CD8-positive, alpha-beta T cell (primary cell): ENCODE measurements at regions of chr10 and their contacts with region 1.

Region 1: GRCh38 chr10:11515596-11516430 is 95.6 kb downstream of the USP6NL start:
- DNase-seq: peak in 7 of 9 experiments; percentile 3 to 77 (median 45)
- ATAC-seq: peak; percentile 85
- H3K4me3 ChIP-seq: no peak overlapping the region
- H3K4me3 Mint-ChIP-seq: no peak overlapping the region
- H3K27ac ChIP-seq: no peak overlapping the region
- H3K27ac Mint-ChIP-seq: no peak overlapping the region
- H3K4me1 ChIP-seq: peaks cover 6% of the 10 kb centered on the region
- H3K4me1 Mint-ChIP-seq: peaks cover 4% of the 10 kb centered on the region
- H3K27me3 ChIP-seq: no peaks in the 10 kb centered on the region
- H3K27me3 Mint-ChIP-seq: no peaks in the 10 kb centered on the region
- CTCF ChIP-seq: peak; percentile 67

Region 2: GRCh38 chr10:11045995-11046775 is 469.6 kb before region 1 on chr10:
- CTCF ChIA-PET with region 1: no interaction called
- POLR2A ChIA-PET with region 1: no interaction called
- intact Hi-C with region 1: no loop called
- DNase-seq: no peak
- ATAC-seq: no peak
- H3K4me3 ChIP-seq: no peak overlapping the region
- H3K4me3 Mint-ChIP-seq: no peak overlapping the region
- H3K27ac ChIP-seq: no peak overlapping the region
- H3K27ac Mint-ChIP-seq: no peak overlapping the region
- H3K4me1 ChIP-seq: no peaks in the 10 kb centered on the region
- H3K4me1 Mint-ChIP-seq: peaks cover 1% of the 10 kb centered on the region
- H3K27me3 ChIP-seq: no peaks in the 10 kb centered on the region
- H3K27me3 Mint-ChIP-seq: peaks cover 7% of the 10 kb centered on the region
- CTCF ChIP-seq: no peak

Region 3: DNA sequence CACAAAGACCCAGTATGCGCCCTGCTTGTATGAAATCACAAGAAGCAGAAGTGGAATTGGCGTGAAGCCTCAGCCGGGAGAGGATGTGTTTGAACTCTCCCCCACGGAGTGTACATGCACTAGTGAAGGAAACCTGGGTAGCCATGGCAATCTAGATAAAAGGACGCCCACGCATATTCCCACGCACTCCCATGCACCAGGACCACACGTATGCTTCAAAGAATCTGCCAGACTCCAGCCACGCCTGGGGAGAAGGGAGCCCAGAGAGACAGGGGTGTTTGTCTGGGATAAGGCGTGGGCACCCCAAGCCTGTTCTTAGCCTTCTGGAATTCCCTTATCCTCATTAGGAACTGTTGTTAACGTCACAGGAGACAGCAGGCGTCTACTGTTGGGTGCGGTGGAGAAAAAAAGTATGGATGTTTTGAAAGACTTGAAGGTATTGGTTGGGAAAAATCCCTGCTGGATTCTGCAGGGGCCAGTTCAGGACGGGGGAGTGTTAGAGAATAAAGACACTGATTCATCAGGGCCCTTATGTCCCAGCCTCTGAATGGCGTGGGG is 197.5 kb after region 1 on chr10:
- CTCF ChIA-PET with region 1: interaction called, 12 read pairs
- POLR2A ChIA-PET with region 1: no interaction called
- intact Hi-C with region 1: no loop called
- DNase-seq: no peak
- ATAC-seq: no peak
- H3K4me3 ChIP-seq: no peak overlapping the region
- H3K4me3 Mint-ChIP-seq: no peak overlapping the region
- H3K27ac ChIP-seq: no peak overlapping the region
- H3K27ac Mint-ChIP-seq: no peak overlapping the region
- H3K4me1 ChIP-seq: peaks cover 8% of the 10 kb centered on the region
- H3K4me1 Mint-ChIP-seq: peaks cover 22% of the 10 kb centered on the region
- H3K27me3 ChIP-seq: peaks cover 0 to 5% of the 10 kb centered on the region in 2 experiments
- H3K27me3 Mint-ChIP-seq: peaks cover 9% of the 10 kb centered on the region
- CTCF ChIP-seq: no peak

Region 4: GRCh38 chr10:11724938-11725776 is 209.3 kb after region 1 on chr10:
- CTCF ChIA-PET with region 1: interaction called, 63 read pairs
- POLR2A ChIA-PET with region 1: no interaction called
- intact Hi-C with region 1: loop called (anchors 1 kb)
- DNase-seq: peak in 2 of 9 experiments; percentile 48 to 68
- ATAC-seq: peak; percentile 73
- H3K4me3 ChIP-seq: no peak overlapping the region
- H3K4me3 Mint-ChIP-seq: no peak overlapping the region
- H3K27ac ChIP-seq: no peak overlapping the region
- H3K27ac Mint-ChIP-seq: no peak overlapping the region
- H3K4me1 ChIP-seq: no peaks in the 10 kb centered on the region
- H3K4me1 Mint-ChIP-seq: peaks cover 4% of the 10 kb centered on the region
- H3K27me3 ChIP-seq: no peaks in the 10 kb centered on the region
- H3K27me3 Mint-ChIP-seq: peaks cover 8% of the 10 kb centered on the region
- CTCF ChIP-seq: peak; percentile 79

Region 5: DNA sequence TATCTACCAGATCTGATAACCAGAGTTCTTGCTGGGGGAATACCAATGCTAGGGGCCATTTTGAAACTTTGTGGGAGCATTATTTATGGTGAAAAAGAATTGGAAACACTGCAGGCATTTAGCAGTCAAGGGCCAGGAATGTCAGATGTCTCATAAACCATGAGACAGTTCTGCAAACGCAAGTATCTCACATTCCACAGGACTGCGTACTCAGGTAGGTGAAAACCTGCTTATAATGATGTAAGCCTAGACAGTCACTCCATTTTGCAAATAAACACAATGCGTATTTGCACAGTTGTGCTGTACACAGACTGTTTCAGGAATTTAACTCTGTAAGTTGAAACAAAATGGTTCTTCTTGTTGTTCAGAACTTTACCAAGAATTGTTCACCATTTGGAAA is 260.3 kb after region 1 on chr10:
- CTCF ChIA-PET with region 1: no interaction called
- POLR2A ChIA-PET with region 1: no interaction called
- intact Hi-C with region 1: no loop called
- DNase-seq: no peak
- ATAC-seq: no peak
- H3K4me3 ChIP-seq: no peak overlapping the region
- H3K4me3 Mint-ChIP-seq: no peak overlapping the region
- H3K27ac ChIP-seq: no peak overlapping the region
- H3K27ac Mint-ChIP-seq: no peak overlapping the region
- H3K4me1 ChIP-seq: no peaks in the 10 kb centered on the region
- H3K4me1 Mint-ChIP-seq: no peaks in the 10 kb centered on the region
- H3K27me3 ChIP-seq: no peaks in the 10 kb centered on the region
- H3K27me3 Mint-ChIP-seq: peaks cover 6% of the 10 kb centered on the region
- CTCF ChIP-seq: no peak